ENCODE measurements at regions of chr1 and their contacts with region 1.

Region 1: DNA sequence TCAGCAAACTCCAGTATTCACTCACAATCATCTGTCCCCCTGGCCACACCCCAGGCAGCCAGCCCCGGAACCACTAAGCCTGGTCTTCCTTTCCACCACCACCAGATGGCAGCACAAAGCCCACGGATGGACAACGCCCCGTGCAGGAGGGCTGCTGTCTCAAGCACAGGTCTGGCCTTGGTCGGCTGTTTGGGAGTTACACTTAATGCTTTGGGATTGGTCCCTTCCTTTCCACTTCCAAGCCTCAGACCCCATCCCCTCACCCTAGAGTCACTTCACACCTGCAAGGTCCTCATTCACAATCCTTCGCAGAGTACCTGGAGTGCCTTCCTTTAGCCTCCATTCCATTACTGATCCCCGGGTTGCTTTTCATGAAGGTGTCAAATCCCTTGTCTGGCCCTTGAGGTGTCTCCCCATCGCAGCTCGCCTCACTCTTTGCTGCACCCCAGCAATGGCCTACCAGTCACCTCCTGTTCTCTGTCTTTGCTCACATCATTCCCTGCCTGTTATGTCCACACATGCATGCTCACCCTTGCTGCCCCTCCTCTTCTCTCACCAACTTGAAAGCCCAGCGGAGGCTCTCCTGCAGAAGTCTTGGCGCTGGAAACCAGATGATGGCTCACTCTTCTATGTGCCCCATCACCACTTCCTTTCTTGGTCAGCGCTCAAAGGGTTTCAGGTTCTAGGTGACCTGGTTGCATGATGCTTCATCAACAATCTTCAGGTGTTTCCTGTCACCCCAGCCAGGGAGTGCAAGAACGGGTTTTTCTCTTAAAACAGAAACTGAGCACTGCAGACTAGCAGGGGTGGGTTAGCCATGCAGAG is 24.9 kb upstream of the KCNA2 start:
- DNase-seq: peak; percentile 79 to 82 (median 80)
- ATAC-seq: peak; percentile 77
- H3K4me3 ChIP-seq: no peak overlapping the region
- H3K27ac ChIP-seq: no peak overlapping the region
- H3K4me1 ChIP-seq: peaks cover 10% of the 10 kb centered on the region
- H3K27me3 ChIP-seq: no peaks in the 10 kb centered on the region
- CTCF ChIP-seq: peak; percentile 41 to 89 (median 82)
- POLR2A ChIP-seq: no peak

Region 2: DNA sequence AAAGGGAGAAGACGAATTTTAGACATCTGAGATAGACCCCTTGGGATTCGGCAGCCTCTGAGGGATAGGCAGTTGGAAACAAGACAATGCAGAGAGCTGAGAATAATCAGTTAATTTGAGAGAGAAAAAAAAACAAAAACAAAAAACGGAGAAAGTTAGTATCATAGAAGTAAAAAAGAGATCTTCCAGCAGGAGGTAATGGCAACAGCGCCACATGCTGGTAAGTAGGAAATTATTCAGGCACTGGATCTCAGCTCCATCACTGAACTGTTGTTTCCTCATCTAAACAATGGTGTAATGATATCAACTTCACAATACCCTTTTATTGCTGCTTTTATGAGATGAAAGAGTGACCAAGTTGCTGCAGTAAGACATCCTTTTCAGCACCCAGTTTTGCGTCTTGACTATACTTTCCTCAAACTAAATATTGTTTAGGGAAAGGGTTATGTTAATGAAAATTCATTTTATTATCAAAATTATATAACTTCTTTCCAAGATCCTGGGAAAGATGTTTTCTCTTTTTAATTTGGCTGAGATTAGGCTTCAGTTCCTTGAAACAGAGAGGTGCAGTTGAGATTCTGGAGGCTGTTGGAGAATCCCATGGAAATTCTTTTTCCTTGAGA is 135.1 kb after region 1 on chr1:
- intact Hi-C with region 1: loop called (anchors 5 kb)
- DNase-seq: peak; percentile 35 to 58 (median 46)
- ATAC-seq: no peak
- H3K4me3 ChIP-seq: no peak overlapping the region
- H3K27ac ChIP-seq: no peak overlapping the region
- H3K4me1 ChIP-seq: no peaks in the 10 kb centered on the region
- H3K27me3 ChIP-seq: no peaks in the 10 kb centered on the region
- CTCF ChIP-seq: peak; percentile 45 to 85 (median 72)
- POLR2A ChIP-seq: no peak

Region 3: GRCh38 chr1:110787328-110788071 is 156.4 kb after region 1 on chr1:
- intact Hi-C with region 1: loop called (anchors 5 kb)
- DNase-seq: no peak
- ATAC-seq: no peak
- H3K4me3 ChIP-seq: no peak overlapping the region
- H3K27ac ChIP-seq: no peak overlapping the region
- H3K4me1 ChIP-seq: no peaks in the 10 kb centered on the region
- H3K27me3 ChIP-seq: no peaks in the 10 kb centered on the region
- CTCF ChIP-seq: no peak
- POLR2A ChIP-seq: no peak

Measured in body of pancreas (tissue), 4 donors.